ENCODE measurements at regions of chr2 and their contacts with region 1.

Region 1: DNA sequence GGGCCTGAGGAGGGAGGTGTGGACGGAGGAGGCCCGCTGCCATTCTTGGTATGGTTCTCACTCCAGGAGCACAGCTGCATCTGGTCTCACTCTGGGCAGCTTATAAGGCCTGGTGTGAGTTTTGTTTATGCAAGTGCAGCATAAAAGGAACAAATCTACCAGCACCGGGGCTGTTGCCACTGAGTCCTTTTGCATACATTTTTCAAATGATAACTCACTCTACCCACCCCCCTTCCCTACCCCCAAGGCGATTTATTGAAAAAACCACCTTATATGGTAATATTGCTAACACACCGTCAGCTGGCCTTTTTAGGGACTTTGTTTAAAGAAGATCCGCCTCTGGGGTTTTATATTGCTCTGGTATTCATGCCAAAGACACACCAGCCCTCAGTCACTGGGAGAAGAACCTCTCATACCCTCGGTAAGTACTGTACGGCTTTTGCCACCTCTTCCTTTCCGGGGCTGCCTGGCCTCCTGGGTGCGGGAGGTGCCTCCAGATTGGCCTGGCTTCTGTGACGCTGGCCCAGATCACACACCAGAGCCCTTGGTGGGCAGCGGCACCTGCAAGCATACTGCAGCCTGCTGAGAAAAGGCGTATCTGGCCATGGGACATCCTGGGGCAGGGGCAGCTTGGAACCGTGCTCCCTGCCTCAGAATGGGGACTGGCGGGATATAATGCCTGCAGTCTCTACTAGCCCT is at the start of gene ACTG2:
- DNase-seq: peak; percentile 83
- total RNA-seq, gene ACTG2: 2,422 to 4,458 TPM

Region 2: GRCh38 chr2:73830871-73831401 is 61.8 kb before region 1 on chr2:
- intact Hi-C with region 1: loop called in 1 of 2 experiments (anchors 5 kb)
- DNase-seq: no peak

Region 3: DNA sequence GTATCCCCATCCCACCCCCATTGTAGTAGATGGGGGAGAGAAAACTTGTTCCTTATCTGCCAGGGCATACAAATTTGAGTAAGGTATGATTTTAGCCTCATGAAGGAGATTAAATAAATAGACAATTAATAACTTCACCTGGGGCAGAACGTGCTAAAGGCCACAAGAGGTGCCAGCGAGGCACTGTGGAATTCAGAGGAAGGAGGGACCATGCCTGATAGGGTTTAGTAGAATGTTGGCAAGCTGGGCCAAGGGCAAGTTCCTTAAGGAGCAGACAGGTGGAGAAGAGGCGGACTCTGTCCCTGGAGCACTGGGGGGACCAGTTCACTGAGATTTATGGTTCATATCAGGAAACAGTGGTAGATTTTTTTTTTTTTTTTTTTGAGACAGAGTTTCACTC is 41.5 kb before region 1 on chr2:
- intact Hi-C with region 1: no loop called
- DNase-seq: no peak

Region 4: DNA sequence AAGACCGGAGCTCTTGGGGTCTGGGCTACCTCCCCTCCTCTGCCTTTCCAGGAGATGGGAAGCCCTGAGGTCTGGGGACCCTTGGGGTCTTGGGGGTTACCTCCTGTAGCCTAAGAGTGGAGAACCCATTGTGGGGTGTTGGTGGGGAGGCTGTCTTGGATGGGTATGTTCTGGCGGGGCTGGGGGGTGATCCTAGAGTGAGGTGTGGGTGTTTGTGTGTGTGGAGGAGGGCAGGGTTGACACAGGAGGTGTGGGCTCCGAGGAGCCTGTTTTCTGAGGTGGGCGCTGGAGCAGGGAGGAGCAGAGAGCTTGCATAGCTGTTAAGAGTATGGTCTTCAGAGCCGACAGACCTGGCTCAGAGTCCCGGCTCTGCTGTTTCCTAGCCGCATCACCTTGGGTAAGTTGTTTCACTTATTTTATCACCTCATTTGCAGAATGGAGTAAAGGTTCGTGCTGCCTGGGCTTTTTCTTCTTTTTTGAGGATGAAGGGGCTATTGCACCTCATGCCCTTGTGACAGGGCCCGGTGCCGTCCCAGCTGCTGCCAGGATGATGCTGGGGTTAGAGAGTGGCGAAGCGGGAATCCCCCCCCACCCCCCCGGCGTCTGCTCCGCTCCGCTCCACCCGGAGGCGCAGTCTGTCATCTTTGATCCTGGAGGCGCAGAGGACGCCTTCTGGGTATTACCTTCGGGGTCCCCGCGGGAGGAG is 109.2 kb after region 1 on chr2:
- intact Hi-C with region 1: no loop called
- DNase-seq: no peak

Measured in posterior vena cava (tissue), 2 donors.